ENCODE measurements at regions of chr11 and their contacts with region 1.

Region 1: DNA sequence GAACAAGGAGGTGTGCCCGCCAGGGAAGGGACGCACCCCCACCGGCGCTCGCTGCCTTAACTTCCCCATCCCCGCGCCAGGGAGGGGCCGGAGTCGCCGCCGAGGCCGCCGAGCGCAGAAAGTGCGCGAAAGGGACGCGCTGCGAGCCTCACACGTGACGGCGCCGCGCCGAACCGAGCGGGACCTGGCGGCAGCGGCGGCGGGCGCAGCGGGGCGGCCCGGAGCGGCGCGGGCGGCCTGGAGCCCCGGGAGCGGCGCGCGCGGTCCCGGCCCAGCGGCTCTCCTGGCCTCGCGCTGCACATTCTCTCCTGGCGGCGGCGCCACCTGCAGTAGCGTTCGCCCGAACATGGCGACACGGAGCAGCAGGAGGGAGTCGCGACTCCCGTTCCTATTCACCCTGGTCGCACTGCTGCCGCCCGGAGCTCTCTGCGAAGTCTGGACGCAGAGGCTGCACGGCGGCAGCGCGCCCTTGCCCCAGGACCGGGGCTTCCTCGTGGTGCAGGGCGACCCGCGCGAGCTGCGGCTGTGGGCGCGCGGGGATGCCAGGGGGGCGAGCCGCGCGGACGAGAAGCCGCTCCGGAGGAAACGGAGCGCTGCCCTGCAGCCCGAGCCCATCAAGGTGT is at the start of gene SORL1:
- DNase-seq: peak; percentile 68
- H3K4me3 Mint-ChIP-seq: peak within 1 kb of the TSS; percentile 84
- H3K27ac Mint-ChIP-seq: no peak within 1 kb of the TSS
- H3K4me1 Mint-ChIP-seq: peaks cover 7% of the 10 kb centered on the region
- H3K27me3 Mint-ChIP-seq: no peaks in the 10 kb centered on the region
- CTCF ChIP-seq: peak; percentile 62
- total RNA-seq, gene SORL1: 5.9 and 6.2 TPM in 2 replicates

Region 2: GRCh38 chr11:121318848-121319834 is 133.0 kb before region 1 on chr11:
- CTCF ChIA-PET with region 1: interaction called, 5 read pairs
- POLR2A ChIA-PET with region 1: no interaction called
- intact Hi-C with region 1: loop called (anchors 1 kb)
- DNase-seq: peak; percentile 57
- H3K4me3 Mint-ChIP-seq: no peak overlapping the region
- H3K27ac Mint-ChIP-seq: no peak overlapping the region
- H3K4me1 Mint-ChIP-seq: peaks cover 6% of the 10 kb centered on the region
- H3K27me3 Mint-ChIP-seq: peaks cover 18% of the 10 kb centered on the region
- CTCF ChIP-seq: peak; percentile 68

Region 3: GRCh38 chr11:121464352-121464946 is 12.4 kb after region 1 on chr11:
- CTCF ChIA-PET with region 1: interaction called, 21 read pairs
- POLR2A ChIA-PET with region 1: interaction called, 10 read pairs
- intact Hi-C with region 1: no loop called
- DNase-seq: peak; percentile 92
- H3K4me3 Mint-ChIP-seq: peak overlapping the region; percentile 52
- H3K27ac Mint-ChIP-seq: no peak overlapping the region
- H3K4me1 Mint-ChIP-seq: peaks cover 43% of the 10 kb centered on the region
- H3K27me3 Mint-ChIP-seq: no peaks in the 10 kb centered on the region
- CTCF ChIP-seq: no peak

Region 4: DNA sequence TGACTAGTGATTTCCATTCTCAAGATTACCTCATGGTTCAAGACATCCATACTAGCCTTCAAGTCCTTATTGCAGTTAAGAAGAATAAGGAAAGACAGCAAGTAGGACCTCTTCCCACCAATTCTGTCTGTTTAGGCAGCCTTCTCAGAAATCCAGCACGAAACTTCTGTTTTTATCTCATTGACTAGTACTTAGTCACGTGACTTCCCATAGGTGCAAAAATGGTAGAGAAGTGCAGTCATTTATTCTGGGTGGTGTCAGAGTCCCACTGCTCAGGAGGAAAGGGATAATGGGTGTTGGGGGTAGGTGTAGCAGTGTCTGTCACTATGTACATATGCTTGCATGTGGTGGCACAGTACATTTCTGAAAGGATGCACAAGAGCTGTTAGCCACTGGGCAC is 58.3 kb after region 1 on chr11:
- CTCF ChIA-PET with region 1: no interaction called
- POLR2A ChIA-PET with region 1: no interaction called
- intact Hi-C with region 1: no loop called
- DNase-seq: no peak
- H3K4me3 Mint-ChIP-seq: no peak overlapping the region
- H3K27ac Mint-ChIP-seq: no peak overlapping the region
- H3K4me1 Mint-ChIP-seq: no peaks in the 10 kb centered on the region
- H3K27me3 Mint-ChIP-seq: no peaks in the 10 kb centered on the region
- CTCF ChIP-seq: no peak

Region 5: DNA sequence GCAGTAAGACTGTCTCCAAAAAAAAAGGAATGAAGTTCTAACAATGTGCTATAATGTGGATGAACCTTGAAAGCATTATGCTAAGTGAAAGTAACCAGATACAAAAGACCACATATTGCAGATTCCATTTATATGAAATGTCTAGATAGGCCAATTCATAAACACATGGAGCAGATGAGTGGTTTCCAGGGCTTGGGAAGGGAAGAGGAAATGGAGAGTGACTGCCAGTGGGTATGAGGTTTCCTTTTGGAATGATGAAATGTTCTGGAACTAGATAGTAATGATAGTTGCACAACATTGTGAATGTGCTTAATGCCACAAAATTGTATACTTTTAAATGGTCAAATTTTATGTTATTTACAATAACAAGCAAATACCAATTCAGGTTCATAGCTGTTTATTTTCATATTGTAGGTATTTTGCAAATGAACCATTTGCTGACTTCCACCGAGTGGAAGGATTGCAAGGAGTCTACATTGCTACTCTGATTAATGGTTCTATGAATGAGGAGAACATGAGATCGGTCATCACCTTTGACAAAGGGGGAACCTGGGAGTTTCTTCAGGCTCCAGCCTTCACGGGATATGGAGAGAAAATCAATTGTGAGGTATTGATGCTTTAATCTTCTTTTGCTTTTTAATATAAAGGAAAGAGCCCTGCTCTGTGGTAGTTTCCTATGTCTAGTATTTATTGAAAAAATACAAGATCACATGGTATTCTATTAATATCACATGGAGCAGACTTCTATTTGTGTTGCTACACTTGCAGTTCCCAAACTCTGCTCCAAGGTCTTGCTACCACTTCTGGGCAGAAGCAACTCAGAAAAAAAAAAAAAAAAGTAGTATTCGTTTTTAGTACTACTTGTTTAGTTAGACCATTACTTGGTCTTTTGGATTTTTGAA is 68.4 kb after region 1 on chr11:
- CTCF ChIA-PET with region 1: interaction called, 4 read pairs
- POLR2A ChIA-PET with region 1: no interaction called
- intact Hi-C with region 1: loop called (anchors 5 kb)
- DNase-seq: peak; percentile 63
- H3K4me3 Mint-ChIP-seq: no peak overlapping the region
- H3K27ac Mint-ChIP-seq: peak overlapping the region; percentile 67
- H3K4me1 Mint-ChIP-seq: peaks cover 26% of the 10 kb centered on the region
- H3K27me3 Mint-ChIP-seq: no peaks in the 10 kb centered on the region
- CTCF ChIP-seq: no peak

Region 6: GRCh38 chr11:121591405-121592033 is 139.4 kb after region 1 on chr11:
- CTCF ChIA-PET with region 1: interaction called, 7 read pairs
- POLR2A ChIA-PET with region 1: no interaction called
- intact Hi-C with region 1: loop called (anchors 1 kb)
- DNase-seq: peak; percentile 80
- H3K4me3 Mint-ChIP-seq: no peak overlapping the region
- H3K27ac Mint-ChIP-seq: no peak overlapping the region
- H3K4me1 Mint-ChIP-seq: peaks cover 24% of the 10 kb centered on the region
- H3K27me3 Mint-ChIP-seq: no peaks in the 10 kb centered on the region
- CTCF ChIP-seq: peak; percentile 86

Region 7: GRCh38 chr11:122505304-122506006 is 1053.4 kb after region 1 on chr11:
- CTCF ChIA-PET with region 1: no interaction called
- POLR2A ChIA-PET with region 1: no interaction called
- intact Hi-C with region 1: loop called (anchors 5 kb)
- DNase-seq: peak; percentile 81
- H3K4me3 Mint-ChIP-seq: no peak overlapping the region
- H3K27ac Mint-ChIP-seq: no peak overlapping the region
- H3K4me1 Mint-ChIP-seq: peaks cover 6% of the 10 kb centered on the region
- H3K27me3 Mint-ChIP-seq: peaks cover 25% of the 10 kb centered on the region
- CTCF ChIP-seq: peak; percentile 93

Measured in MCF 10A (cell line).